Mammary epithelial cell (primary cell): ENCODE measurements at regions of chr20 and their contacts with region 1.

Region 1: DNA sequence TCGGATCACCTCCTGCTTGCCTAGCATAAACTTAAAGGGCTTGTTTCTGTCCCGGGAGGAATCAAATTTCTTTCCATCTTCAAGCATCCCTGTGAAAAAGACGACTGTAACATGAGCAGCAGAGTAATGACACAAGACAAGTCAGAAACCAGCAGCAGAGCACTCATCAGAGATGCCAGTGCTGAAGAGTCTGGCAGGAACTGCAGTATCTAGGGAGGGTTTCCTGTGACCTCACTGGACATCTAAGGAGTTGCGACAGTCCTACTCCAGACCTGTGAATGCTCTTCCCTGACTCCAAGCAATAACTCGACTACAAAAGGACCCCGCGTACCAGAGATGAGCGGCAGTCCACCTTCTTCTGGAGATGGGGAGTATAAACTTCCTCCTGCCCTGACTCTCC is 17.3 kb downstream of the FKBP1A start:
- DNase-seq: peak; percentile 37
- H3K4me3 ChIP-seq: no peak overlapping the region
- H3K27ac ChIP-seq: no peak overlapping the region
- H3K4me1 ChIP-seq: peaks cover 71% of the 10 kb centered on the region
- H3K27me3 ChIP-seq: no peaks in the 10 kb centered on the region
- CTCF ChIP-seq: no peak

Region 2: DNA sequence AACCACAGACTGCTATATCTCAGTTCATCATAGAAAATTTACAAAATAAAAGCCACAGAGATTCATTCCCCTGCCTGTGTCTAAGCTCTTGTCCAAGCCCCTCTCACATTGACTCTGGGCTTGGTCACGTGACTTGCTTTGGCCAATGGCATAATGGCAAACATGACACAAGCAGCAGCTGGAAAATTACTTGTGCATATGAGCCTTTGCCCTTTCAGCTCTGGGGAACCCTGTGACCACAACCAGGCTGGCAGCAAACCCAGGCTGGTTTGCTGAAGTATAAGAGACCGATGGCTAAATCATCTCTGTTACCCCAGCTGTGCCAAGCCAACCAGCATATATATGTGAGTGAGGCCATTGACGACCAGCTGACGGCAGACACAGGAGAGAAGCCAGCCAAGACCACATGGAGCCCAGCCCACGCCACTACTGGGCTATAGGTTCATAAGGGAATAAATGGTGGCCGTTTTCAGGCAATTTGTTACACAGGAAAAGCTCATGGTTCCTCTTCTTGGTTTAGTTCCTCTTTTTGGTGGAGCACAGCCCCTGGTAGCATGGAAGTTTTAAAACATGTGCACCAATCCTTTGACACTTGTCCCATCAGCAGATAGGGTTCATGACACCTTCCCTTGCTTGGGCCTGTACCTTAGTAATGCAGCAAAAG is 341.6 kb before region 1 on chr20:
- CTCF ChIA-PET with region 1: no interaction called
- dilution Hi-C with region 1: no loop called
- in situ Hi-C with region 1: no loop called
- intact Hi-C with region 1: no loop called
- DNase-seq: no peak
- H3K4me3 ChIP-seq: no peak overlapping the region
- H3K27ac ChIP-seq: no peak overlapping the region
- H3K4me1 ChIP-seq: no peaks in the 10 kb centered on the region
- H3K27me3 ChIP-seq: no peaks in the 10 kb centered on the region
- CTCF ChIP-seq: no peak

Region 3: GRCh38 chr20:1313236-1313964 is 62.1 kb before region 1 on chr20:
- CTCF ChIA-PET with region 1: interaction called, 8 read pairs
- dilution Hi-C with region 1: no loop called
- in situ Hi-C with region 1: no loop called
- intact Hi-C with region 1: loop called (anchors 2 kb)
- DNase-seq: peak; percentile 37
- H3K4me3 ChIP-seq: peak overlapping the region in 2 of 3 experiments; percentile 17 to 27
- H3K27ac ChIP-seq: no peak overlapping the region
- H3K4me1 ChIP-seq: peaks cover 2% of the 10 kb centered on the region
- H3K27me3 ChIP-seq: no peaks in the 10 kb centered on the region
- CTCF ChIP-seq: peak; percentile 83 to 95

Region 4: DNA sequence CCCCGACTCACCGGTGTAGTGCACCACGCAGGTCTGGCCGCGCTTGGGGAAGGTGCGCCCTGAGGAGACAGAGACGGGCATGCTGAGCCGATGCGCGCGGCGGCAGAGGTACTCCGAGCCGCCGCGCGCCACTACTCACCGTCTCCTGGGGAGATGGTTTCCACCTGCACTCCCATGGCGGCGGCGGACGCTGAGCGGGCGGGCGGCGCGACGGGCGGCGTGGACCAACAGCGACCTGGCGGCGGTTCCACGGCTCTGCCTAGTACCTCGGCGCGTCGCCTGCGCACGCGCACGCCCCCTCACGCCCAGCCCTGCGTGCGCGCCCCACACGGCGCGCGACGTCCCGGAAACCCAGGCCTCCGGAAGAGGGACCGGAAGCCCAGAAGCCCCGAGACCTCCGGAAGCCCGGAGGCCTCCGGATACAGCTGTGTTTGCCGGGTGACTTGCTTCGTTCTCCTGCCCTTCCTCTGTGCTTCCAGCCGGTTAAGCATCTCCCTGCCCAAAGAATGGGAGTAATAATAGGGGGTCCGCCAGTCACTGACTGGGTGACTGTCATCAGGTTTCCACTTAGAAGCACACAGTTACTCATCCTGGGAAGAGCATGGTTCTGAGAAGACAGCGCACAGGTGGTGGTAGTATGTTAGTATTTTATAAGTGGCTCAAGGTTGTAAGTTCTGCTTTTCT is 17.4 kb after region 1 on chr20 and contains the start of gene FKBP1A:
- CTCF ChIA-PET with region 1: no interaction called
- dilution Hi-C with region 1: no loop called
- in situ Hi-C with region 1: no loop called
- intact Hi-C with region 1: loop called (anchors 2 kb)
- DNase-seq: peak; percentile 92
- H3K4me3 ChIP-seq: peak within 1 kb of the TSS; percentile 57 to 84 (median 76)
- H3K27ac ChIP-seq: peak within 1 kb of the TSS; percentile 57
- H3K4me1 ChIP-seq: peaks cover 43% of the 10 kb centered on the region
- H3K27me3 ChIP-seq: no peaks in the 10 kb centered on the region
- CTCF ChIP-seq: no peak
- total RNA-seq, gene FKBP1A: 139 to 425 TPM